ENCODE measurements at regions of chr19 and their contacts with region 1.

Region 1: DNA sequence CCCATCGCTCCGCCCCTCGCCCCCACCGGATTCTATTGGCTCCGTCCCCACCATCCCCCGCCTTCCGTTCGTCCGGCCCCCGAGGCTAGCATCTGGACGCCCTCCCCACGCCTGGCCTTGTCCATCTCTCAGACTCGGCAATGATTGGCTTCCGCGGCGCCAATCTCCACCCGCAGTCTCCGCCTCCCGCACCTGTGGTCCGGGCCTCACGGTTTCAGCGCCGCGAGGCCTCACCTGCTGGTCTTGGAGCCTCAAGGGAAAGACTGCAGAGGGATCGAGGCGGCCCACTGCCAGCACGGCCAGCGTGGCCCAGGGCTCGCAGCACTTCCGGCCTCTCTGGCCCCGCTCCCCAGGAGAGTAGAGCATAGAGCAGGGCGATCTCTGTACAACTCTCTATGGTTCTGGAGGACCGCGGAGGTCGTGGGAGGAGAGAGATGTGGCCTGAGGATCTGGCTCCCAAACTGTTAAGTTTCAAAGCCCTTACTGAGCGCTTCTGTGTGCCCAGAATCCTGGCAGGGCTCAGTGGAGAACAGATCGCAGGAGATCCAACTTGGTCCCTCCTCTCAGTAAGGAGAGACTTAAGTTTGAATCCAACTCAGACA is at the start of gene ERCC1:
- DNase-seq: peak; percentile 94 to 97 (median 95)
- ATAC-seq: peak; percentile 76 to 89 (median 86)
- H3K4me3 ChIP-seq: peak within 1 kb of the TSS; percentile 38 to 83 (median 70)
- H3K27ac ChIP-seq: peak within 1 kb of the TSS; percentile 66 to 98 (median 92)
- H3K4me1 ChIP-seq: peaks cover 2 to 73% (median 32%) of the 10 kb centered on the region in 12 donors
- H3K27me3 ChIP-seq: peaks cover 0 to 4% (median 0%) of the 10 kb centered on the region in 9 donors
- CTCF ChIP-seq: no peak
- POLR2A ChIP-seq: peak in 1 of 2 donors; percentile 29
- total RNA-seq, gene ERCC1: 104 to 156 (median 121) TPM

Region 2: GRCh38 chr19:45405435-45406225 is 18.1 kb before region 1 on chr19:
- intact Hi-C with region 1: loop called in 3 of 10 experiments (anchors 2 kb)
- DNase-seq: peak; percentile 92 to 93 (median 93)
- ATAC-seq: peak; percentile 63 to 79 (median 68)
- H3K4me3 ChIP-seq: peak overlapping the region; percentile 47 to 86 (median 70)
- H3K27ac ChIP-seq: peak overlapping the region; percentile 87 to 97 (median 93)
- H3K4me1 ChIP-seq: peaks cover 0 to 65% (median 38%) of the 10 kb centered on the region in 12 donors
- H3K27me3 ChIP-seq: peaks cover 0 to 19% (median 0%) of the 10 kb centered on the region in 9 donors
- CTCF ChIP-seq: no peak
- POLR2A ChIP-seq: peak in 1 of 2 donors; percentile 23

Region 3: DNA sequence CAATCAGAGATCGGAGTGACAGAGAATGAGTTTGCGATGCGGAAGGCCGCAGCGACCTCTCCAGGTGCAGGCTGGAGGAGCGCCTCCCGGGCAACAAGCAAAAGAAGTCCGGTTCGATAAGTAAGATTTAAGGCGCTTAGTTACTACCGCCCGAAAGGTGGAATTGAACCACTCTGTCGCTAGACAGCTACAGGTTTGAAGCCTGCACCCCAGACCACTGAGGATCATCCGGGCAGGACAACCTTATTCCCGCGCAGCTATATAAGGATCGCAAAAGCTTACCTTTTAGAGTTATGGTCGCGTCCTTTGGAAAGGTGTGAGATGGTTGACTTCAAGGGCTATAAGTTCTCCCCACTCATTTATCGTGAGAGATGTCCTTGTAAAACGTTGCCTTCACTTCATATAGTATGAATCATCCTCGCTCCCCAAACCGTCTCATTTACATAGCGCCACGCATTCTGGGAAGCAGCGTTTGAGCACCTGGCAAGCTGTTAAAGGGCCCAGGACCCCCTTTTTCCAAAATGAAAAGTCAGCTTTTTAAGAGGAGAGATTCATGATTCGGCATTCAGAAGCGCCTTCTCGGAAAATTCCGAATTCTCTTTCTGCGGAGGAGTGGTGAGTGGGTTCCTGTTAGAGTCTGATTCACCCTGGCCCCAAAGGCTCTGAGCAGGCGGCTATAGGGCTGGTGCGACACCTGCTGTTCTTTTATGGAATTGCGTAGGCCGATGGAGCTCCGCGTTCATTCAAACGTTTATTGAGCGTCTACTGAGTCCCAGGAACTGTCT is 55.0 kb after region 1 on chr19:
- intact Hi-C with region 1: loop called in 4 of 10 experiments (anchors 2 to 10 kb)
- DNase-seq: peak; percentile 81 to 87 (median 83)
- ATAC-seq: peak; percentile 94 to 98 (median 96)
- H3K4me3 ChIP-seq: peak overlapping the region; percentile 28 to 68 (median 54)
- H3K27ac ChIP-seq: peak overlapping the region; percentile 91 to 99 (median 96)
- H3K4me1 ChIP-seq: peaks cover 0 to 28% (median 9%) of the 10 kb centered on the region in 12 donors
- H3K27me3 ChIP-seq: peaks cover 0 to 8% (median 0%) of the 10 kb centered on the region in 9 donors
- CTCF ChIP-seq: peak; percentile 95 to 99 (median 97)
- POLR2A ChIP-seq: peak in 1 of 2 donors; percentile 27

Region 4: GRCh38 chr19:45584332-45585157 is 160.9 kb after region 1 on chr19 and contains the start of gene OPA3:
- intact Hi-C with region 1: loop called in 1 of 10 experiments (anchors 10 kb)
- DNase-seq: peak; percentile 100
- ATAC-seq: peak; percentile 95 to 97 (median 96)
- H3K4me3 ChIP-seq: peak within 1 kb of the TSS; percentile 52 to 85 (median 66)
- H3K27ac ChIP-seq: peak within 1 kb of the TSS; percentile 92 to 100 (median 96)
- H3K4me1 ChIP-seq: peaks cover 0 to 20% (median 13%) of the 10 kb centered on the region in 12 donors
- H3K27me3 ChIP-seq: no peaks in the 10 kb centered on the region
- CTCF ChIP-seq: peak in 3 of 12 donors; percentile 26 to 35 (median 34)
- POLR2A ChIP-seq: peak in 1 of 2 donors; percentile 71
- total RNA-seq, gene OPA3: 21.3 to 30.4 (median 22.5) TPM